ENCODE measurements at regions of chr4 and their contacts with region 1.

Region 1: DNA sequence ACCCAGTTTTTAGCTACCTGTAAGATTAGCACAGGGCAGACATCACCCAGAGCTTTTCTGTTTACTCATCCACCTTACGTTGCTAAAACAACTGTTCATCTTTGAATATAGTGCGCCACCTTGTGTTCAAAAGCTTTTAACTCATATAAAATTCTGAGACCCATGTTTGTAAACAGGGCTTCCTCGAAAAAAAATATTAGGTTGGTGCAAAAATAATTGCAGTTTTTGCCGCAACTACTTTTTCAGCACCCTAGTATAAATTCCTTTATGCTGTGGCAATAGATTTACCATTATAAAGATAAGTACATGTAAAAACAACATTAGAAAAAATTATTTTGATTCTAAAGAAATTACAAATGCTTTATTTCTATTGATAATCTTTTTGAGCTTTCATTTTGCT is 147.9 kb downstream of the LRBA start:
- DNase-seq: no peak

Region 2: DNA sequence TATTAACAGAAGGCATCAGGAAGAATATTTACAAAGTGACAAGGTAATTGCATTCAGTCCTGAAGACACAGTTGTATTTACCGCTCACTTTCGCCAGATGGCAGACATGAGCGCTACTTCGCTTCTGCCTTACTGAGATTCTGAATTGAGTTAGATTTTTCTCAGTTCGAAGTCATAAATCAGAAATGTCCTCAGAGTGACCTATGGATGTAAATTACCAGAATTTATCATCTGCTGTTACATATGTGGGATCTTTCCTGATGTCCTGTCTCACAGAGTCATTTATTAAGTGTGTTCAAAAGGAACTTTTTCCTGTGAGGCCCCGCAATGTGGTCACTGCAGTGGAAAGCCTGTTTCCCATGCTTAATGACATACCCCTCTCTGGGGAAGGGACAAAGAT is 886.2 kb before region 1 on chr4:
- intact Hi-C with region 1: loop called in 1 of 2 experiments (anchors 10 kb)
- DNase-seq: no peak

Region 3: GRCh38 chr4:149999485-150000074 is 867.6 kb before region 1 on chr4:
- intact Hi-C with region 1: loop called in 1 of 2 experiments (anchors 10 kb)
- DNase-seq: no peak

Region 4: DNA sequence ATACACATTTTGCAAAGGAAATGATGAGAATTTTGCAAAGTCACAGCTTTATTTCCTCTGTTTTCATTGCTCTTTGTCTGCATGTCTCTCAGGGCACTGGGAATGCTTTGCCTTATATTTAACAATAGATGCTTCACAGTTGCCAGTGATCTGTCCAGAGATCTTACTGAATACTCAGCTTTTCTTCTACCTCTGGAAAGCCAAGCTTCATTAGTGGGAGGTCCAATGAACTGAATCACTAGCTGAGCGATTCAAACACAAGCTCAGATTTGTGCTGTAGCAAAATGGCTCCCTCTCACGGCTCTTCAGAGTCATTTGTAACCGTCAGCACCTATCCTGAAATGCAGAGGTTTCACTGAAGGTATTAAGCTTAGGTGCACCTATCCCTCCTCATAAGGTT is 650.0 kb before region 1 on chr4:
- intact Hi-C with region 1: no loop called
- DNase-seq: no peak

Region 5: DNA sequence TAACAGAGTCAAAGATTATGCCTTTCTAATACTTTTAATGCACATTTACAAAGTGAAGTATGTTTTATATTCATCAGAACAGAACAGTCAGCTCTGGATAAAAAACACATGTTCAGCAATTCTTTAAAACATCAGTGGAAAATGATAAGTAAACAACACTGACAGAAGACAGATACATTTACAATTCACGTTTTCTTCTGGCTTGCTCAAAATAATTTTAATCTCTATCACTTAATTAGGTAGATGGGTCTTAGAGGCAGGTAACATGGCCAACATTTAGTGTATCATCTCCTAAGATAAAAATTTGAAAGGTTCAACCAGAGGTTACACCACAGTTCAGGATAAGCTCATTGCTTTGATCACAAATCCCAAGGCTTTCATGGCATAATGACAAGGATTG is 442.0 kb before region 1 on chr4:
- intact Hi-C with region 1: loop called in 1 of 2 experiments (anchors 5 kb)
- DNase-seq: no peak